ENCODE measurements at regions of chr18 and their contacts with region 1.

Region 1: GRCh38 chr18:43405097-43405496 is 127.8 kb upstream of the SYT4 start:
- DNase-seq: no peak
- ATAC-seq: no peak

Region 2: DNA sequence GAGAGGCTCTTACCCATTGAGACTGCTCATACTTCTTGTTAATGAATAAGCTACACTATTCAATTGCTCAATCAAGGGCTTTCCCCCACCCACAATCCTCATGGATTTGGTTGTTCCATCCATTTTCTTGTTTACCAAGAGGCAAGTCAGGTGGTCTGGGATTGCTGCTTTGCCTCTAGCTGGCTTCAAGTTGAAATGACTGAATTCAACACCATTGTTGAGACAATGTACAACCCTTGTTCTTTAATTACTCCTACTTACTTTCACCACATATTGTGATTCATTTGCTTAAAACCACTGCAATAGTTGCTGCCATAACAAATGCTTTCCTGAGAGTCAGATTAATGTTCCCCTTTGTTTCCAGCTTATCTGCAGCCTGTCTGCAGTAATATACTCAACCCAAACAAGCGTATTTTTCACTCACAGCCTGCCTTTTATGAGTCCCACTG is 821.8 kb before region 1 on chr18:
- intact Hi-C with region 1: loop called (anchors 10 kb)
- DNase-seq: no peak
- ATAC-seq: no peak

Measured in sciatic nerve (tissue), 2 donors.